PC-3 (cell line): ENCODE measurements at regions of chr6 and their contacts with region 1.

Region 1: GRCh38 chr6:151044465-151045441 is 179.3 kb downstream of the MTHFD1L start:
- DNase-seq: peak; percentile 93
- ATAC-seq: peak; percentile 56
- H3K4me3 ChIP-seq: no peak overlapping the region
- H3K27ac ChIP-seq: peak overlapping the region; percentile 100
- H3K4me1 ChIP-seq: peaks cover 53% of the 10 kb centered on the region
- H3K27me3 ChIP-seq: no peaks in the 10 kb centered on the region
- CTCF ChIP-seq: no peak

Region 2: DNA sequence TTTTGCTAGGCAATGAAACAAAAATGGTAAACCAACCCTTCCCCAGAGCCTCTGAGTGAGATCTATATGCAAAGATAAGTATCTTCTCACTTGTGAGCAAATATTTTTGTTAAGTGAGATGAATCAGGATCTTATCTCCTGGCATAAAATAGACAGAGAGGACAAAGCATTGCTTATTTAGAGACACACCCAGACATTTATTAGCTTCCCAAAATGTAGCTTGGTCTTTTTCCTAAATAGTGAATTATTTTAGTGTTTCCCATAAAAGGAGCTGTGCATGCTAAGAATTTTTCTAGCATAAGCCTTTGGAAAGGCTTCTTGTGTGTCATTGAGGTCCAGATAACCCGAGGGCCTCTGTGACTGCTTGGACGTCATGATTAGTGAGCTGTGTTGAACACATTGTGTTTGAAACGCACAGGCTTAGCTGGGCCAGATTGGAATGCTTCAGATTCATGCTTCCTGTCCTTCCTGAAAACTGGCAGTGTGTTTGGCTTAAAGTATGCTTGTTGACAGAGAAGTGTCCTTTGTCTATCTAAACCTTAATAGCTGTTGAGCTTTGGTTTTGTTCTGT is 162.8 kb before region 1 on chr6:
- CTCF ChIA-PET with region 1: no interaction called
- POLR2A ChIA-PET with region 1: interaction called, 11 read pairs
- intact Hi-C with region 1: no loop called
- DNase-seq: peak; percentile 88
- ATAC-seq: peak; percentile 95
- H3K4me3 ChIP-seq: peak overlapping the region; percentile 23; the same call in 1 of the 2 replicates
- H3K27ac ChIP-seq: peak overlapping the region; percentile 98
- H3K4me1 ChIP-seq: peaks cover 27% of the 10 kb centered on the region
- H3K27me3 ChIP-seq: no peaks in the 10 kb centered on the region
- CTCF ChIP-seq: no peak

Region 3: GRCh38 chr6:150891888-150892485 is 152.8 kb before region 1 on chr6:
- CTCF ChIA-PET with region 1: no interaction called
- POLR2A ChIA-PET with region 1: no interaction called
- intact Hi-C with region 1: loop called (anchors 10 kb)
- DNase-seq: peak; percentile 79
- ATAC-seq: peak; percentile 77
- H3K4me3 ChIP-seq: no peak overlapping the region
- H3K27ac ChIP-seq: 0 out of 2 replicates have a peak overlapping the region, but pooled peaks have one; percentile 17
- H3K4me1 ChIP-seq: peaks cover 13% of the 10 kb centered on the region
- H3K27me3 ChIP-seq: no peaks in the 10 kb centered on the region
- CTCF ChIP-seq: peak; percentile 79

Region 4: DNA sequence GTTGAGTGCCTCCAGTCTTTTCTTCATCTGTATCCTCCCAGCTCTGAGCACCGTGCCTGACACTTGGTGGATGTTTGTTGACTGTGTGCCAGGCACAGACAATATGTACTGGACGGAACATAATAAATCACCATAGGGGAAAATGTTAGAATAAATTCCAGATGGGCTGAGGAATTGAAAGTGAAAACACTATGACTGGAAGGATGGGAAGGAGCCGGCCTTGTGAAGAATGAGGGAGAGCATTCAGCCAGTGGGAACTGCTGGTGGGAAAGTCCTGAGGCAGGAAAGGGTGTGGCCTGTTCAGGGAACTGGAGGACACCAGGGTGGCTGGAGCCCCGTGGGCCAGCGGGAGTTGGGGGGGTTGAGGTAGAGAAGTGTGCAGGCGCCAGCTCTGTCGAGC is 103.8 kb before region 1 on chr6:
- CTCF ChIA-PET with region 1: no interaction called
- POLR2A ChIA-PET with region 1: no interaction called
- intact Hi-C with region 1: no loop called
- DNase-seq: no peak
- ATAC-seq: no peak
- H3K4me3 ChIP-seq: no peak overlapping the region
- H3K27ac ChIP-seq: no peak overlapping the region
- H3K4me1 ChIP-seq: no peaks in the 10 kb centered on the region
- H3K27me3 ChIP-seq: no peaks in the 10 kb centered on the region
- CTCF ChIP-seq: no peak

Region 5: GRCh38 chr6:151060096-151060765 is 15.5 kb after region 1 on chr6:
- CTCF ChIA-PET with region 1: no interaction called
- POLR2A ChIA-PET with region 1: no interaction called
- intact Hi-C with region 1: loop called (anchors 1 kb)
- DNase-seq: peak; percentile 97
- ATAC-seq: peak; percentile 86
- H3K4me3 ChIP-seq: no peak overlapping the region
- H3K27ac ChIP-seq: peak overlapping the region; percentile 100
- H3K4me1 ChIP-seq: peaks cover 50% of the 10 kb centered on the region
- H3K27me3 ChIP-seq: no peaks in the 10 kb centered on the region
- CTCF ChIP-seq: no peak

Region 6: DNA sequence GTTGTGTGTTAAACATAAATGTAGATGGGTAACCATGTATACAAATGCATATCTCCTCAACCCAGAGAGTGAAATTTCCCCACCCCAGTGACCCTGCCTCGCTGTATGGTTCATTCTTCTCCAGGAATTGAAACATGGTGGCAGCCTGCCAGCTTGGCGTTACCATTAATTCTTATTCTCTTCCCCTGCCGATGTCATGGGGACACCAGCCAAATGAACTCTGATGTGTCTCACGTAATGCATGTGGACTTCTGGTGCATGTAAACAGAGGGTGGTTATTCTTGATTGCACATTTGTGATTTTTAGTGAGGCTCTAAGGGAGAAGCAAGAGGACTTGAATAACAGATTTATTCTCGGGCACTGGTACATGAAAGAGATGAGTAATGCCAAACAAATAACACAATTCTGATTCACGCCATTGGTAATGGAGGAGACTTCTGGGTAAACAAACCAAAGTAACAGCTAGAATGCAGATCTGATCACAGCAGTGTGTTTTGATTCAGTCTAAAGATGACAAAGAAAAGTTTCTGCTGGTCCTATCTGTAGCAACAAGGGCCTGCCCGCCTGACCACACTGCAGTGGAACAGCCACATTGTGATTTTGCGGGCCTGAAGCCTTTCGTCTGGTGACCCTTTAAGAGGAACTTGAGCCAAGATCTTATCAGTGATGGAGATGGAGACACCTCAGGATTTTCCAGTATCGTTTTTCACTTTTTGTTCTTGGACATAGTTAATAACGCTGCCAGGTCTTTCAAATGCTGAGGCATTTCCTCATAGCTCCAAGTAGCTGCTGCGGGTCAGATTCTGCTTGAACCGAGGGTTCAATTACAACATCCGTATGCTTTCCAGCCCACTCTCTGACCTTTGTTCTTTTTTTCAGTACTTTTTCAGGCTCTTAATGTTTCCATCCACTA is 23.2 kb after region 1 on chr6:
- CTCF ChIA-PET with region 1: no interaction called
- POLR2A ChIA-PET with region 1: interaction called, 3 read pairs
- intact Hi-C with region 1: loop called (anchors 1 kb)
- DNase-seq: peak; percentile 97
- ATAC-seq: peak; percentile 81
- H3K4me3 ChIP-seq: peak overlapping the region; percentile 24; the same call in 1 of the 2 replicates
- H3K27ac ChIP-seq: peak overlapping the region; percentile 99
- H3K4me1 ChIP-seq: peaks cover 58% of the 10 kb centered on the region
- H3K27me3 ChIP-seq: no peaks in the 10 kb centered on the region
- CTCF ChIP-seq: no peak